ENCODE measurements at regions of chr7 and their contacts with region 1.

Region 1: GRCh38 chr7:101077303-101078089 is 7.8 kb upstream of the TRIM56 start:
- DNase-seq: peak; percentile 88
- H3K4me3 ChIP-seq: no peak overlapping the region
- H3K27ac ChIP-seq: no peak overlapping the region
- H3K4me1 ChIP-seq: no peaks in the 10 kb centered on the region
- H3K27me3 ChIP-seq: peaks cover 14% of the 10 kb centered on the region; the same call in 1 of the 2 replicates
- CTCF ChIP-seq: peak; percentile 99
- EP300 ChIP-seq: no peak
- RAD21 ChIP-seq: peak; percentile 88

Region 2: DNA sequence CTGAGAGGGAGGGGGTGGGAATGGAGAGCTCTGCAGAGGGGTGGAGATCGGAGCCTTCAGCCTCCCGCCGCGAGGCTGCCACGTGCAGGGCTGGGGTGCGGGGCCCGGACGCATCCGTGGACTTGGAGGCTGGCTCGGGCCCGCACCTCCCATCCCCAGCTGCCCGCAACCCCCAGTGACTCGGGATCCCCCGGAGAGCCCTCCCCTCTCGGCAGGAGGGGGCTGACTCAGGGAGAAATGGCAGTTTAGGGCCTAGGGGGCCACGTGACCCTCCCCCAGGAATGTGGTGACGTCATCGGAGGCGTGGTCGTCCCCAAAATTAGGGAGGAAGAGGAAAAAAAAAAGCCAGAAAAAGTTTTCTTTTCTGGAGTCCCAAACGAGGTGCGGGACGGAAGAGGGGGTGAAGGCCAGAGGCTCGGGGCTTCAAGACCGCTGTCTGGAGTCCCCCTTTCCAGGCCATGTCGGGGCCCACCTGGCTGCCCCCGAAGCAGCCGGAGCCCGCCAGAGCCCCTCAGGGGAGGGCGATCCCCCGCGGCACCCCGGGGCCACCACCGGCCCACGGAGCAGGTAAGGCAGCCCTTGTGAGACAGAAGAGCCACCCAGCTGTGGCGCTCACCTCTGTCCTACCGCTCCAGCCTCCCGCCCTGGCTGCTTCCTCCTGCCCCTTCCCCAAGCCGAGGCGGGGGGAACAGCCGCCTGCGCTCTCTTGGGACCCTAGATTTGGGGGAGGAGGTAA is 210.3 kb before region 1 on chr7 and contains the start of gene TRIP6:
- CTCF ChIA-PET with region 1: no interaction called
- POLR2A ChIA-PET with region 1: no interaction called
- DNase-seq: peak; percentile 59
- H3K4me3 ChIP-seq: no peak within 1 kb of the TSS
- H3K27ac ChIP-seq: peak within 1 kb of the TSS in 1 of 2 experiments; percentile 43; a peak in 1 of 4 replicates
- H3K4me1 ChIP-seq: peaks cover 2 to 19% of the 10 kb centered on the region in 2 experiments; a peak in 3 of 4 replicates
- H3K27me3 ChIP-seq: no peaks in the 10 kb centered on the region
- CTCF ChIP-seq: no peak
- EP300 ChIP-seq: no peak
- RAD21 ChIP-seq: no peak
- polyA plus RNA-seq, gene TRIP6: 6.4 and 6.5 TPM in 2 replicates

Region 3: GRCh38 chr7:100949227-100949932 is 128.1 kb before region 1 on chr7 and contains the start of gene MUC3A:
- CTCF ChIA-PET with region 1: interaction called, 11 read pairs
- POLR2A ChIA-PET with region 1: no interaction called
- DNase-seq: no peak
- H3K4me3 ChIP-seq: no peak within 1 kb of the TSS
- H3K27ac ChIP-seq: no peak within 1 kb of the TSS
- H3K4me1 ChIP-seq: no peaks in the 10 kb centered on the region
- H3K27me3 ChIP-seq: peaks cover 68% of the 10 kb centered on the region
- CTCF ChIP-seq: no peak
- EP300 ChIP-seq: no peak
- RAD21 ChIP-seq: no peak
- polyA plus RNA-seq, gene MUC3A: 0.03 and 0.11 TPM in 2 replicates

Region 4: GRCh38 chr7:101031082-101031481 is 46.4 kb before region 1 on chr7:
- CTCF ChIA-PET with region 1: no interaction called
- POLR2A ChIA-PET with region 1: no interaction called
- DNase-seq: no peak
- H3K4me3 ChIP-seq: no peak overlapping the region
- H3K27ac ChIP-seq: no peak overlapping the region
- H3K4me1 ChIP-seq: no peaks in the 10 kb centered on the region
- H3K27me3 ChIP-seq: peaks cover 21% of the 10 kb centered on the region
- CTCF ChIP-seq: no peak
- EP300 ChIP-seq: no peak
- RAD21 ChIP-seq: no peak

Region 5: GRCh38 chr7:101058355-101058754 is 19.1 kb before region 1 on chr7:
- CTCF ChIA-PET with region 1: interaction called, 27 read pairs
- POLR2A ChIA-PET with region 1: no interaction called
- DNase-seq: no peak
- H3K4me3 ChIP-seq: no peak overlapping the region
- H3K27ac ChIP-seq: no peak overlapping the region
- H3K4me1 ChIP-seq: no peaks in the 10 kb centered on the region
- H3K27me3 ChIP-seq: peaks cover 87% of the 10 kb centered on the region
- CTCF ChIP-seq: no peak
- EP300 ChIP-seq: no peak
- RAD21 ChIP-seq: no peak

Region 6: GRCh38 chr7:101094416-101095375 is 17.2 kb after region 1 on chr7:
- CTCF ChIA-PET with region 1: interaction called, 27 read pairs
- POLR2A ChIA-PET with region 1: no interaction called
- DNase-seq: peak; percentile 80
- H3K4me3 ChIP-seq: peak overlapping the region in 1 of 2 experiments; percentile 9; a peak in 1 of 4 replicates
- H3K27ac ChIP-seq: peak overlapping the region; percentile 18 to 93; a peak in 3 of 4 replicates
- H3K4me1 ChIP-seq: peaks cover 2 to 24% of the 10 kb centered on the region in 2 experiments; a peak in 3 of 4 replicates
- H3K27me3 ChIP-seq: no peaks in the 10 kb centered on the region
- CTCF ChIP-seq: peak; percentile 99
- EP300 ChIP-seq: no peak
- RAD21 ChIP-seq: peak; percentile 76

Measured in SK-N-SH (cell line).